ENCODE measurements at regions of chr22 and their contacts with region 1.

Region 1: DNA sequence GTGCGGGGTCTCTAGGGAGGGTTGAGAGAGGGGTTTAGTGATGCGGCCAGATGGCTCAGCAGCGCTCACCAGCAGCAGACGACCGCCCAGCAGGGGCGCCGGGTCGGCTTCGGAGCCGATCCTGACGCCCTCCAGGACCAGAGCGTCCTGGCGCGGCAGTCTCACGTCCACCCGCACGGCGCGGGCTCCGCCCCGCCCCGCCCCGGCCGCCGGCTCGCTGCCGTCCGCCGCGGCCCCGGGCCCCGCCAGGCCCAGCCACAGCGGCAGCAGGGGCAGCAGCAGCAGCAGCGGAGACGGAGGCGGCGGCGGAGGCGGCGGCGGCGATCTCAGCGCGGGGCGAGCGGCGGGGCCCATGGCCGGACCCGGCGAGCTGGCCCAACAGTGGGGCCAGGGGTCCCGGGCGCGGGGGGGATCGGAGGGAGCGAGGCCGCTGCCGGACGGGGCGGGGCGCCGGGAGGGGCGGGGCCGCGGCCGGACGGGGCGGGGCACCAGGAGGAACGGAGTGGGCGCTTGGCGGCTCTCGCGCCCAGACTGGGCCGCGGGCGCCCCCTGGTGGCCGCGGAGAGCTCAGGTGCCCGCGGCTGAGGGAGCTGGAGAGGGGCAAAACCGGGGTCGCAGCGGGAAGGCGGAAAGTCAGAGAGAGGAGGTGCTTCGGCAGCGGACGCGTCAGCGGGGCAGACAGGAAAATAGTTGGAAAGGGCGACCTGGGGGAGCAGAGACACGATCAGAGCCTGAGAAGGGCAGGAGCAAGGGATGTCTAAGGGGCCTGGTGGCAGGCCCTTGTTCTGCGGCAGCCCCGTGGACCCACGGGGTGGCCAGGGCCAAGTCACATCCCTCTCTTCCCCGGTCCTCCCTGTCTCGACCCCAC is at the start of gene RNF215:
- DNase-seq: no peak
- H3K4me3 ChIP-seq: peak within 1 kb of the TSS; percentile 42 to 85 (median 58)
- H3K27ac ChIP-seq: peak within 1 kb of the TSS; percentile 75 to 94 (median 86)
- H3K4me1 ChIP-seq: peaks cover 12 to 19% (median 12%) of the 10 kb centered on the region in 3 donors
- H3K27me3 ChIP-seq: no peaks in the 10 kb centered on the region
- CTCF ChIP-seq: peak; percentile 89 to 96 (median 96)
- POLR2A ChIP-seq: no peak
- total RNA-seq, gene RNF215: 2.3 to 8.4 (median 3.9) TPM

Region 2: GRCh38 chr22:29813563-29813962 is 573.6 kb before region 1 on chr22:
- intact Hi-C with region 1: no loop called
- DNase-seq: no peak
- H3K4me3 ChIP-seq: no peak overlapping the region
- H3K27ac ChIP-seq: peak overlapping the region in 3 of 4 donors; percentile 31 to 57 (median 42)
- H3K4me1 ChIP-seq: peaks cover 17 to 91% (median 34%) of the 10 kb centered on the region in 3 donors
- H3K27me3 ChIP-seq: no peaks in the 10 kb centered on the region
- CTCF ChIP-seq: peak in 2 of 6 experiments; percentile 14 to 28
- POLR2A ChIP-seq: no peak

Region 3: GRCh38 chr22:30104501-30105156 is 282.6 kb before region 1 on chr22:
- intact Hi-C with region 1: loop called (anchors 10 kb)
- DNase-seq: no peak
- H3K4me3 ChIP-seq: no peak overlapping the region
- H3K27ac ChIP-seq: no peak overlapping the region
- H3K4me1 ChIP-seq: no peaks in the 10 kb centered on the region
- H3K27me3 ChIP-seq: peaks cover 0 to 1% (median 0%) of the 10 kb centered on the region in 4 donors
- CTCF ChIP-seq: no peak
- POLR2A ChIP-seq: no peak

Region 4: DNA sequence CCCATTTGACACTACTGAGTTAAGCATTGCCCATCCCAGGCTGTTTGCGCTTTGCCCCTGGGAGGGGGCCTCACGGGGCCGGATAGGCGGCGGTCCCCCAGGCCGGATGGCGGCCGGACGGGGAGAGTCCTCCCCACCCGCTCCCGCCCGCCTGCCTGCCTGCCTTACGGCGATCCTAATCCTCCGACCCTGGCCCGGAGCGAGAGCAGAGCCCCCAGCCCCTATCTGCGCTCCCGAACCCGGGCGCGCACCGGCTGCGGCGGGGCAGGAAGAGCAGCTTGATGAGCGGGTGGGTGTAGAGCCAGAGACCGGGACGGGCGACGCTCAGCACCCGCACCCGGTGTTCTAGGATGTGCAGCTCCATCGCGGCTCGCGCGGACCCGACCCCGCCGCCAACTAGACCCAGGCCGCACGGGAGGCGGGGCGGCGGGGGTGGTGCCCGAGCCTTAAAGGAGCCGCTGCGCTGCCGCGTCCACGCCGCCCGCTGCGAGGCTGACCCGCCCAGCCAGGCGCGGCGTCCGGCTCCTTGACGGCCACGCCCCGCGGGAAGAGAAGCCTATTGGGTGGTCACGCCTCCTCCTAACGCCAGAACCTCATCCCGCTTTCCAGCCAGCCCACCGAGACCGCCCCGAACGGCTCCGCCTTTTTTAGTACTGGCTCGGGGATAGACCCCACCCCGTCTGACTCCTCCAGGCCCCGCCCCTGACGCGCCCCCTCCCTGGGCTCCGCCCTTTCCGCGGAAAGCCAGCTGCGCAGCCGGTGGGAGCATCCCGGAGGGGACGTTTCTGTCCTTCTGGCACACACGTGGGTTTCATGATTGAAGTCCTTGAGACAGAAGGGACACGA is 97.8 kb before region 1 on chr22 and contains the start of gene CASTOR1:
- intact Hi-C with region 1: loop called (anchors 5 kb)
- DNase-seq: peak; percentile 82
- H3K4me3 ChIP-seq: peak within 1 kb of the TSS; percentile 66 to 99 (median 82)
- H3K27ac ChIP-seq: peak within 1 kb of the TSS; percentile 96 to 99 (median 97)
- H3K4me1 ChIP-seq: peaks cover 50 to 78% (median 56%) of the 10 kb centered on the region in 3 donors
- H3K27me3 ChIP-seq: no peaks in the 10 kb centered on the region
- CTCF ChIP-seq: no peak
- POLR2A ChIP-seq: peak in 3 of 4 donors; percentile 55 to 81 (median 77)
- total RNA-seq, gene CASTOR1: 18.9 to 76.4 (median 40.7) TPM

Region 5: DNA sequence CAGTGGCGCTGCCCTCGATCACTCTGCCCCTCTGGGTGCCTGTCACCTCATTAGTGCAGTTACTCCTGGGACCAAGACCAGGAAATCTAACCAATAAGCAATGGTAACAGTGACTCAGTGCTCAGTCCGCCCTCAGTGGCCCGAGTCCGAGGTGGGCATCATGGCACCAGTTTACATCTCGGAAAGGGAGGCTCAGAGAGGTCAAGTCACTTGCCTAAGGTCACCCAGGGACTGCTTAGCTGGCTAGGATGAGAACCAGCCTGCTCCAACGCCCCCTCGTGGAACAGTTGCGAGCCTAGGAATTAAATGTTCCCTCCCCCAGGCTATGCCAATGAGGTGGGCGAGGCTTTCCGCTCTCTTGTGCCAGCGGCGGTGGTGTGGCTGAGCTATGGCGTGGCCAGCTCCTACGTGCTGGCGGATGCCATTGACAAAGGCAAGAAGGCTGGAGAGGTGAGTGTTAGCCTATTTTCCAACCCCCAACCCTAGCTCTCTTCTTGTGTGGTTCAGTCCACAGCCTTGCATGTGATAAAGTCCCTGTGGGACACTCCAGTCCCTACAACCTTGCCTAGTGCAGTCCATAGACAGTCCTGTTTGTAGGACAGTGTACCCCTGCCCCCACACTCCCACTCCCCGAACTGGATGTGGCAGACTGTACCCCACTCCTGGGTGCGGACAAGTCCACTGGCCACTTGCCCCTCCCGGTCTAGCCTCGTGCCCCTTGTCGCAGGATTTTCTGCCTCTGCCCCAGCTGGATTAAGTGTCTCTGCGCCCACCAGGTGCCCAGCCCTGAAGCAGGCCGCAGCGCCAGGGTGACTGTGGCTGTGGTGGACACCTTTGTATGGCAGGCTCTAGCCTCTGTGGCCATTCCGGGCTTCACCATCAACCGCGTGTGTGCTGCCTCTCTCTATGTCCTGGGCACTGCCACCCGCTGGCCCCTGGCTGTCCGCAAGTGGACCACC is 39.5 kb after region 1 on chr22:
- intact Hi-C with region 1: loop called (anchors 5 kb)
- DNase-seq: no peak
- H3K4me3 ChIP-seq: peak overlapping the region; percentile 63 to 83 (median 70)
- H3K27ac ChIP-seq: peak overlapping the region; percentile 83 to 99 (median 98)
- H3K4me1 ChIP-seq: peaks cover 30 to 53% (median 45%) of the 10 kb centered on the region in 3 donors
- H3K27me3 ChIP-seq: no peaks in the 10 kb centered on the region
- CTCF ChIP-seq: peak; percentile 27 to 87 (median 79)
- POLR2A ChIP-seq: no peak

Region 6: DNA sequence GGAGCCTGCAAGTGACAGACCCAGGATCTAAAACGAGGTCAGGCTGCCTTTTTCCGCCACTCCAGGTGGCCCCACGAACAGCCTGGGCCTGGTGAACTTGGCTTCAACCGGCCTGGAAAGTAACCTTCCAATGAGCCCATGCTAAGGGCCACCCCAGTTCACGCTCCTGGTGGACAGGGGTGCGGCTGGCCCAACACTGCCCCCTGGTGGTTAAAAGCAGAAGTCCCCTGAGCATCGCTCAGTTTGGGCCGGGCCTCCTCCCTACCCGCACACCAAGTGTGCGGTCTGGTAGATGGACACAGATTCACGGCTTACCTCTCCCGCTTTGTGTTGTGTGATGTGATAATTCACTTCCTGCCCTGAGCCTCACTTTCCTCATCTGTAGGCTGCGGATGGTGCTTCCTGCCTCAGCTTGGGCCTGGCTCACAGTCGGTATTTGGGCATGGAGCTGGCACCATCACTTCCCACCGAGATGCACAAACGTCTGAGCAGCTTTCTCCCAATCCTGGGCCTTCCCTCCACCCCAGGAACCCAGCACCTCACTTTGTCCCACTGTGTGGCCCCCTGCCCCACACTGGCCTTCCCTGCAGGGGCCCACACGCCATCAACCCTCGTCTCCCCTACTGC is 98.3 kb after region 1 on chr22:
- intact Hi-C with region 1: loop called (anchors 2 kb)
- DNase-seq: no peak
- H3K4me3 ChIP-seq: no peak overlapping the region
- H3K27ac ChIP-seq: no peak overlapping the region
- H3K4me1 ChIP-seq: peaks cover 0 to 5% (median 0%) of the 10 kb centered on the region in 3 donors
- H3K27me3 ChIP-seq: peaks cover 0 to 17% (median 0%) of the 10 kb centered on the region in 4 donors
- CTCF ChIP-seq: peak; percentile 91 to 98 (median 95)
- POLR2A ChIP-seq: no peak

Measured in esophagus squamous epithelium (tissue), 5 donors.